ENCODE measurements at regions of chr6 and their contacts with region 1.

Region 1: GRCh38 chr6:44058617-44059358 is 68.5 kb downstream of the MRPL14 start:
- H3K4me3 Mint-ChIP-seq: peak overlapping the region; percentile 77
- H3K27ac Mint-ChIP-seq: peak overlapping the region; percentile 100
- H3K4me1 Mint-ChIP-seq: peaks cover 84% of the 10 kb centered on the region
- H3K27me3 Mint-ChIP-seq: no peaks in the 10 kb centered on the region

Region 2: DNA sequence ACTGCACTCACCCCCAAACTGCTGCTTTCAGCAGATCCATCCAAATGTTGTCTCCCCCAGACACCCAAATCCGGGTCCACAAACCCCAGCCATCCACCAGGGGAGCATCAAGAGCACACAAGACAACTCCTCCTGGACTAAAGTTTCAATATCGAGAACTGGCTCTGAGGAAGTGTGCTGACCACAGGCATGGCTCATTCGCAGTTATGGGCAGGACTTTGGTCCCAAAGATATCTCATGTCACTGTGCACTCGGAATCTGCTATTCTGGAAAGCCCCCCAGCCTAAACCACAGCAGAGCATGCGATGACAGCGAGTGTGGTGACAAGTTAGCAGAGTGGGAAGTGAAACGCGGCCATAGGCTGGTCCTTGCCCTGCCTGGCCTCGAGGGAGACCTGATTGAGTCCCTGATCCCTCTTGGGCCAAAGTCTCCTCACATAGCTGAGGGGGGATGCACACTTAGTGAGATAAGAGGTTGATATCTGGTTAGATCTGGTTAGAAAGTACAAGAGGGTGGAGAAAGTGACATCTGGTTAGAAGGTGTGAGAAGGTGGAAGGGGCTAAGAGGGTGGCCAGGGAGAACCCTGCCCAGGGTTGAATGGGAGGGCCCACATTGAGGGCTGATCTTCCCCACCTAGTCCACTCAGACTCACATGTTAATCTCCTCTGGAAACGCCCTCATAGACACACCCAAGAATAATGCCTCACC is 81.2 kb before region 1 on chr6:
- intact Hi-C with region 1: loop called (anchors 2 kb)
- H3K4me3 Mint-ChIP-seq: no peak overlapping the region
- H3K27ac Mint-ChIP-seq: peak overlapping the region; percentile 83
- H3K4me1 Mint-ChIP-seq: peaks cover 37% of the 10 kb centered on the region
- H3K27me3 Mint-ChIP-seq: peaks cover 27% of the 10 kb centered on the region